ENCODE measurements at regions of chr16 and their contacts with region 1.

Region 1: DNA sequence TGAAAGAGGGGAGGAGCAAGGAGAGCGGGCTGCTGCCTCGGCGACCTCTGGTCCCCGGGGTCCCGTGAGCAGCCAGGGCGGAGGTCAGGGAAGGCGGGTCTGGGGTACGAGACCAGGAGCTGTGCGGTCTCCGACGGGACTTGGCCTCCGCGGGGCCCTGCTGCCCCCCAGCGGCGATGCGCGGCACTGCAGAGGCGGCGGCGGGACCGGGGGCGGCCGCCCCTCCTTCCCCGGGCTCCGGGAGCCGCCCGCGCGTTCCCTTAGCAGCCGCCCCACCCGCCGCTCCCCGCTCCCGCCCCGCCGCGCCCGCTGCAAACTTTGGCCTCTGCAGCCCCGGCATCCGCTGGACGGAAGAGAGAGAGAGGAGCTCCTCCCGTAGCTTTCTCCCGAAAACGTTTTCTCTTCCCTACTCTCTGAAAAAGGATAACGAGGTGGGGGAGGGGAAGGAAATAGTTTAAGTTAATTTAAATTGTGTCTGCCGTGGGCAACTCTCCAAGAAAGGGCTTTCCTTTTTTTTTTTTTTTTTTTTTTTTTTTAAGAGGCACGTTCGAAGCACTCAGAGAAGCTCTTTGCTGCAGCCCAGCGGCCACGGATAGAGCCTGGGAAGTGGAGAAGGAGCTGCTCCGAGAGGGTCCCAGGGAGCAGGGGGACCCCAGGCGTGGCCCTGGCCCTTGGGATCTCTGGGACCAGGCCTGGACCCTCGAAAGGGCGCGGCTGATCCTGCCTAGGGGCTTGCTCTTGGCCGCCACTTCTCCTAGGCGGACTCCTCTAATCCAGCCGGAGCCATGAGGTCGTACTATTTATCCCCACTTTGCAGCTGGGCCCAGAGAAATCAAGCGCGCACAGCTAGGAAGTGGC is 43.2 kb downstream of the C16orf82 start:
- DNase-seq: peak; percentile 73 to 86
- ATAC-seq: peak; percentile 43 to 79 (median 73)
- H3K4me3 ChIP-seq: peak overlapping the region; percentile 36
- H3K27ac ChIP-seq: peak overlapping the region; percentile 30
- H3K4me1 ChIP-seq: no peaks in the 10 kb centered on the region
- H3K27me3 ChIP-seq: peaks cover 0 to 23% (median 4%) of the 10 kb centered on the region in 3 donors
- CTCF ChIP-seq: peak; percentile 84

Region 2: DNA sequence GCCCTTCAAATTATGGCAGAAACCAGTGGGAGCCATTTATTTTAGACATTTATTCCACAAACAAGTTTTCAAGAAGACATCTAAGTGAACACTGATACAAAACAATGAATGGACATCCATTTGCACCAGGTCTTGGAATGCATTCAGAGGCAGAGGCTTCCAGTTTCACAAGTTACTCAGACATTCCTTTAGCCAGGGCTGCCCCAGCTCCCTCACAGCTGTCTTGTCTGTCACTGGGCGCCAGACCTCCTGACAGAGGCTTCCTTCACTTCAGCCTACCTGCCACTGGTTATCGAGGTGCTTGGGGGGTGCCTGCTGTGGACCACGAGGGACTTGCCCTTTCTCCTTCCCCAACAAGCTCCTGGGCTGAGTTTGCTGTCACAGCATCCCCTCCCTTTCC is 1873.9 kb before region 1 on chr16:
- intact Hi-C with region 1: loop called in 1 of 2 experiments (anchors 10 kb)
- DNase-seq: no peak
- ATAC-seq: peak in 3 of 4 donors; percentile 47 to 70 (median 66)
- H3K4me3 ChIP-seq: no peak overlapping the region
- H3K27ac ChIP-seq: no peak overlapping the region
- H3K4me1 ChIP-seq: no peaks in the 10 kb centered on the region
- H3K27me3 ChIP-seq: no peaks in the 10 kb centered on the region
- CTCF ChIP-seq: no peak

Region 3: GRCh38 chr16:25838724-25839186 is 1271.1 kb before region 1 on chr16:
- intact Hi-C with region 1: loop called in 1 of 2 experiments (anchors 10 kb)
- DNase-seq: no peak
- ATAC-seq: no peak
- H3K4me3 ChIP-seq: no peak overlapping the region
- H3K27ac ChIP-seq: no peak overlapping the region
- H3K4me1 ChIP-seq: no peaks in the 10 kb centered on the region
- H3K27me3 ChIP-seq: peaks cover 0 to 3% (median 0%) of the 10 kb centered on the region in 3 donors
- CTCF ChIP-seq: peak; percentile 62